Dendritic cell treated with granulocyte-macrophage colony-stimulating factor and Interleukin-4, amounts not matched to agents 40 ng/mL and 50 ng/mL, for 4 days (primary cell): ENCODE measurements at regions of chrX and their contacts with region 1.

Region 1: GRCh38 chrX:63754860-63755582 is 30.0 kb downstream of the ARHGEF9 start:
- H3K4me3 Mint-ChIP-seq: peak overlapping the region; percentile 92
- H3K27ac Mint-ChIP-seq: peak overlapping the region; percentile 95
- H3K4me1 Mint-ChIP-seq: peaks cover 57% of the 10 kb centered on the region
- H3K27me3 Mint-ChIP-seq: no peaks in the 10 kb centered on the region

Region 2: DNA sequence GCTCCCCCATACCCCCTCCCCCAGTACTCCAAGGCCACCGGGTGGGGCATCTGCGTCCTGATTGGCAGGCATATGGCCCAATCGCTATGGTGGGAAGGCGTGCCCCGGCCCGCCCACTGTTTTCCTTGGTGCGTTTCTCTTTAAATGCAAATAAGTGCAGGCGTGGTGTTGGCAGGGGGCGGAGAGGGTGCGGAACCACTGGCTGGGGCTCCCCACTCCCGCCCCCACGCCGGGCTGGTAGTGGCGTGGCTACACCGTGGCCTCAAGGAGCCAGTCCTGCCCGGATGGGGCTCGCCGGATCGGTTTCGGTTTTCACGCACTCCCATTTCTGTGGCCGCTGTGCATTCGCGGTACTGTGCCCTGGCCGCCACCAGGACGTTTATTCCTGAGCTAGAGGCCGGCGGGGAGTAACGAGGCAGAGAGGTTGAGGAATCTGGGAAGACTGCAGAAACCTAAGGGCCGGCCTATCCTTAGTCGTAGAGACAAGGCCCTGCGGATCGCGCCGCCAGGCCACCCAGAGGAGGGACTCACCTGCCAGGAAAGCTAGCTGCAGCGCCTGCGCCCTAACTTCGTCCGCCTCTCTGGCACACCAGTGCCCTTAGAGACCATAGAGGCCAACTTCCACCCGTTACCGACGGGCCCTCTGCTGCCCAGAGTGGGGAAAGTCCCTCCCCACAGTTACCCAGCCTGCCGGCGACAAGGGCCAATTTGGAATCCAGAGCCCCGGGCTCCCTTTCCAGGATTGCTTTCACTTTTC is 450.9 kb after region 1 on chrX:
- intact Hi-C with region 1: loop called (anchors 5 kb)
- H3K4me3 Mint-ChIP-seq: peak overlapping the region; percentile 88
- H3K27ac Mint-ChIP-seq: peak overlapping the region; percentile 93
- H3K4me1 Mint-ChIP-seq: peaks cover 24% of the 10 kb centered on the region
- H3K27me3 Mint-ChIP-seq: no peaks in the 10 kb centered on the region